Activated B cell treated with CpG ODN at 0.5 μM for 24 hours (primary cell): ENCODE measurements at regions of chr1 and their contacts with region 1.

Region 1: DNA sequence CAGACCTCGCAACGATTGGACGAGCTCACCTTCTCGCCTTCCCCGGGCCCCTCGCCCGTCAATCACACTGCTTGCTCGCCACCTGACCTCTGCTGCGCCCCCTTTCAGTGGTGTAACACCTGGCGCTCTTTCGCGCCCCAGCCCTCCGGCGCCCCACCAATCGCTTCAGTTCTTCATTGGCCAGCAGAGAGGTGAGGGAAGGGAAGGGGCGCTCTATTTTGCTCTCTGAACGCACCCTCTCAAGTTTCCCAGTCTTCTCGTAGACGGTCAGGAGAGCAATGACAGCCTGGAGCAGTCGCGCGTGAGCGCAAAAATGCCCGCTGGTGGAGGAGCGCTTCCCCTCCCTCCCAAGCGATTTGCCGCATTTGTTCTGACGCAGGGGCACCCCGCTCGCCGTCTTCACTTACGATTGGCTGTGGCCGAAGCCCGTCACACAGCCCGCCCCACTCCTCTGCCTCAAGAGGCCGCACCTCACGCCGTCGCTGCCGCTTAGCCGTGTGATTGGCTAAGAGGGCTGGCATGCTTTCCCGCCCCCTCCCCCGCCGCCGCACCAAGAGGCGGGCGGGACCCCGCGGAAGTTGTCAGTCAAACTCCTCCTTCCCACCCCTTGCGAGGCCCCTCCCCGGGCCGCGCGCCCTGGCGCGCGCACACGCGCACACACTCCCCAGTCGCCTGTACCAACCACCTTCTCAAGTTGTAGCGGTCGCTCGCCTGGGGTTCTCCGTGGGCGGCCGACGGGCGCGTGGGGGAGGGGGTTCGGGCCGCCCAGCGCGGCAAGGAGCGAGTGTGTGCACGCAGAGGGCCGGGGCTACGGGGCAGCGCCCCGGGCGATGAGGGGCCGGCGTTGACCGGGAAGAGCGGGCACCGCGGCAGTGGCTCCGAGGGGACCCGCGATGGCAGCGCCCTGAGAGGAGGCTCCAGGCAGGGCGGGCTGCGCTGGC is at the start of gene PPP2R5A:
- DNase-seq: peak; percentile 96
- ATAC-seq: peak; percentile 86
- H3K4me3 Mint-ChIP-seq: peak within 1 kb of the TSS; percentile 96
- H3K27ac Mint-ChIP-seq: peak within 1 kb of the TSS; percentile 98
- H3K4me1 Mint-ChIP-seq: peaks cover 40% of the 10 kb centered on the region
- H3K27me3 Mint-ChIP-seq: no peaks in the 10 kb centered on the region
- CTCF ChIP-seq: no peak
- total RNA-seq, gene PPP2R5A: 27.9 and 31.6 TPM in 2 replicates

Region 2: DNA sequence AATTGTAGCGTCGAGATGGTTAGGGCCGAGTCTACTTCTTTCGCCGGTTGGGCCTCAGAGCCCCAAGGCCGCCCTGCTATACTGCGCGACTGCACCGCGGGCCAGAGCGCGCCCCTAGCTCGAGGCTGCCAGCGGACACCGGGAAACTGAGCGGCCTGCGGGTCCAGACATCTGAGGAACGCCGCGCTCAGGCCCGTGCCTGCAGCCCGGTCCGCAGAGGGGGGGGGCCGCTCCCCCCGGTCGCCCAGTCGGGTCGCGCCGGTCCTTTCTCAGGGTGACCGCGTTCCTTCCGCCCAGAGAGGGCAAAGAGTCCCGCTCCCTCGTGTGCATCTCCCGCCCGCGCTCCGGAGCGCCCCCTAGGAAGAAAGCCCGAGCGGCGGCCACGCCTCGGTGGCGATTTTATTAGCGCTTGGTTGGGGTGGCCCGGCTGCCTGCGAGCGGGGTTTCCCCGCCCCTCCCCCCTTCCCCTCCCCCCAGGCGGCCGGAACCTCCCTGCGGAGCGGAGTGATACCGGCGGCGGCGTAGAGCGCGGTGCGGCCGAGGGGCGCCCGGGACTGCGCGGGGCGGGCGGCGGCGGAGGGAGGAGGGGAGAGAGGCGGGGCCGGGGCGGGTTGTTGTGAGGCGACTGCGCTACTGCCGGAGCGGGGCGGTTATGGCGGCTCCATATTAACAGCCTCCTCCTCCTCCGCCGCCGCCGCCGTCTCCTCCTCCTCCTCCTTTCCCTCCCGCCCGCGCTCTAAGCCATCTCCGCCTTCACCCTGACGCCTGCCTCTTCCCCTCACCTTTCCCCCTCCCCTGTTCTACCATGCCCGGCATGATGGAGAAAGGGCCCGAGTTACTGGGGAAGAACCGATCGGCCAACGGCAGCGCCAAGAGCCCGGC is 1026.0 kb before region 1 on chr1 and contains the start of gene RCOR3:
- CTCF ChIA-PET with region 1: no interaction called
- POLR2A ChIA-PET with region 1: no interaction called
- intact Hi-C with region 1: loop called (anchors 1 kb)
- DNase-seq: peak; percentile 86
- ATAC-seq: peak; percentile 75
- H3K4me3 Mint-ChIP-seq: peak within 1 kb of the TSS; percentile 93
- H3K27ac Mint-ChIP-seq: peak within 1 kb of the TSS; percentile 97
- H3K4me1 Mint-ChIP-seq: peaks cover 20% of the 10 kb centered on the region
- H3K27me3 Mint-ChIP-seq: no peaks in the 10 kb centered on the region
- CTCF ChIP-seq: peak; percentile 59
- total RNA-seq, gene RCOR3: 59.3 and 72.3 TPM in 2 replicates

Region 3: GRCh38 chr1:211698161-211699026 is 586.6 kb before region 1 on chr1:
- CTCF ChIA-PET with region 1: no interaction called
- POLR2A ChIA-PET with region 1: interaction called, 6 read pairs
- intact Hi-C with region 1: loop called (anchors 1 kb)
- DNase-seq: peak; percentile 59
- ATAC-seq: peak; percentile 40
- H3K4me3 Mint-ChIP-seq: peak overlapping the region; percentile 68
- H3K27ac Mint-ChIP-seq: no peak overlapping the region
- H3K4me1 Mint-ChIP-seq: peaks cover 57% of the 10 kb centered on the region
- H3K27me3 Mint-ChIP-seq: peaks cover 3% of the 10 kb centered on the region
- CTCF ChIP-seq: peak; percentile 22

Region 4: GRCh38 chr1:212070720-212071302 is 214.2 kb before region 1 on chr1:
- CTCF ChIA-PET with region 1: interaction called, 53 read pairs
- POLR2A ChIA-PET with region 1: interaction called, 8 read pairs
- intact Hi-C with region 1: no loop called
- DNase-seq: no peak
- ATAC-seq: peak; percentile 47
- H3K4me3 Mint-ChIP-seq: no peak overlapping the region
- H3K27ac Mint-ChIP-seq: no peak overlapping the region
- H3K4me1 Mint-ChIP-seq: no peaks in the 10 kb centered on the region
- H3K27me3 Mint-ChIP-seq: no peaks in the 10 kb centered on the region
- CTCF ChIP-seq: no peak

Region 5: DNA sequence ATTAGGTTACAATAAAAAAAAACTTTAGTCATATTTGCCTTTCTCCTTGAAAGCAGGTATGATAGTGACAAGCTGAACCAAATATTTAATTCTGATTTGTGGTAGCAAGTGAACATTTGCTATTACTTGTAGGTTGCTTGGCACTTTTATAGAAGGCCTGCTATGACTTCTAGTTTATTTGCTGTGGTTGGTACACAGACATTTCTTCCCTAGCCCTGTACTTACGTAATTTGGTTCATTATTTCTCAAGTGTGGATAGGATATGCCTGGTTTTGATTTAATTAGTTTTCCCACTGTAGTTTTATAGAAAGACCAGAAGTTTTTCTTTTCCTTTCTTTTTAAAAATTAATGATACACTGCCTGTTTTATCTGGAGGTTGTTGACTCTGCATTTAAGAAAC is 56.1 kb after region 1 on chr1:
- CTCF ChIA-PET with region 1: no interaction called
- POLR2A ChIA-PET with region 1: no interaction called
- intact Hi-C with region 1: no loop called
- DNase-seq: no peak
- ATAC-seq: no peak
- H3K4me3 Mint-ChIP-seq: no peak overlapping the region
- H3K27ac Mint-ChIP-seq: no peak overlapping the region
- H3K4me1 Mint-ChIP-seq: no peaks in the 10 kb centered on the region
- H3K27me3 Mint-ChIP-seq: no peaks in the 10 kb centered on the region
- CTCF ChIP-seq: no peak

Region 6: GRCh38 chr1:212432706-212433576 is 147.9 kb after region 1 on chr1 and contains the start of gene NENF:
- CTCF ChIA-PET with region 1: no interaction called
- POLR2A ChIA-PET with region 1: no interaction called
- intact Hi-C with region 1: loop called (anchors 1 kb)
- DNase-seq: peak; percentile 80
- ATAC-seq: peak; percentile 99
- H3K4me3 Mint-ChIP-seq: peak within 1 kb of the TSS; percentile 78
- H3K27ac Mint-ChIP-seq: peak within 1 kb of the TSS; percentile 22
- H3K4me1 Mint-ChIP-seq: peaks cover 16% of the 10 kb centered on the region
- H3K27me3 Mint-ChIP-seq: no peaks in the 10 kb centered on the region
- CTCF ChIP-seq: no peak
- total RNA-seq, gene NENF: 24.1 and 26.4 TPM in 2 replicates

Region 7: GRCh38 chr1:212699104-212699624 is 414.1 kb after region 1 on chr1:
- CTCF ChIA-PET with region 1: no interaction called
- POLR2A ChIA-PET with region 1: no interaction called
- intact Hi-C with region 1: loop called (anchors 1 kb)
- DNase-seq: peak; percentile 56
- ATAC-seq: peak; percentile 55
- H3K4me3 Mint-ChIP-seq: peak overlapping the region; percentile 88
- H3K27ac Mint-ChIP-seq: peak overlapping the region; percentile 79
- H3K4me1 Mint-ChIP-seq: peaks cover 45% of the 10 kb centered on the region
- H3K27me3 Mint-ChIP-seq: peaks cover 11% of the 10 kb centered on the region
- CTCF ChIP-seq: no peak